OCI-LY7 (cell line): ENCODE measurements at regions of chr3 and their contacts with region 1.

Region 1: GRCh38 chr3:162122405-162122804 is 625.8 kb downstream of the OTOL1 start:
- DNase-seq: no peak
- H3K4me3 ChIP-seq: no peak overlapping the region
- H3K27ac ChIP-seq: no peak overlapping the region
- H3K4me1 ChIP-seq: no peaks in the 10 kb centered on the region
- CTCF ChIP-seq: no peak

Region 2: GRCh38 chr3:161672478-161672877 is 449.9 kb before region 1 on chr3:
- CTCF ChIA-PET with region 1: no interaction called
- POLR2A ChIA-PET with region 1: no interaction called
- intact Hi-C with region 1: no loop called
- DNase-seq: no peak
- H3K4me3 ChIP-seq: no peak overlapping the region
- H3K27ac ChIP-seq: no peak overlapping the region
- H3K4me1 ChIP-seq: no peaks in the 10 kb centered on the region
- CTCF ChIP-seq: no peak

Region 3: GRCh38 chr3:162072656-162073164 is 49.7 kb before region 1 on chr3:
- CTCF ChIA-PET with region 1: no interaction called
- POLR2A ChIA-PET with region 1: no interaction called
- intact Hi-C with region 1: loop called (anchors 2 kb)
- DNase-seq: no peak
- H3K4me3 ChIP-seq: no peak overlapping the region
- H3K27ac ChIP-seq: no peak overlapping the region
- H3K4me1 ChIP-seq: no peaks in the 10 kb centered on the region
- CTCF ChIP-seq: no peak

Region 4: DNA sequence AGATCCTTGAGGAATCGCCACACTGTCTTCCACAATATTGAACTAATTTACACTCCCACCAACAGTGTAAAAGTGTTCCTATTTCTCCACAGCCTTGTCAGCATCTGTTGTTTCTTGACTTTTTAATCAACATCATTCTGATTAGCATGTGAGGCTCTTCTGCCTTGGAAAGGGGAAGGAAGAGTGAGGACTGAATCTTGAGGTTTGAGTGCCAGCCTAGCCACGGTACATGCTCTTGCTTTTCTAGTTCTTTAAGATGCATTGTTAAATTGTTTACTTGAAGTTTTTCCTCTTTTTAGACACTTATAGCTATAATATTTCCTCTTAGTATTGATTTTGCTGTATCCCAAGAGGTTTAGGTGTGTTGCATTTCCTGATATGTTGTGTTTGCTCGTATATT is 29.7 kb before region 1 on chr3:
- CTCF ChIA-PET with region 1: no interaction called
- POLR2A ChIA-PET with region 1: no interaction called
- intact Hi-C with region 1: no loop called
- DNase-seq: no peak
- H3K4me3 ChIP-seq: no peak overlapping the region
- H3K27ac ChIP-seq: no peak overlapping the region
- H3K4me1 ChIP-seq: no peaks in the 10 kb centered on the region
- CTCF ChIP-seq: no peak

Region 5: GRCh38 chr3:162103808-162104207 is 18.6 kb before region 1 on chr3:
- CTCF ChIA-PET with region 1: no interaction called
- POLR2A ChIA-PET with region 1: no interaction called
- intact Hi-C with region 1: no loop called
- DNase-seq: no peak
- H3K4me3 ChIP-seq: no peak overlapping the region
- H3K27ac ChIP-seq: no peak overlapping the region
- H3K4me1 ChIP-seq: no peaks in the 10 kb centered on the region
- CTCF ChIP-seq: no peak